PC-9 (cell line): ENCODE measurements at regions of chr1 and their contacts with region 1.

Region 1: DNA sequence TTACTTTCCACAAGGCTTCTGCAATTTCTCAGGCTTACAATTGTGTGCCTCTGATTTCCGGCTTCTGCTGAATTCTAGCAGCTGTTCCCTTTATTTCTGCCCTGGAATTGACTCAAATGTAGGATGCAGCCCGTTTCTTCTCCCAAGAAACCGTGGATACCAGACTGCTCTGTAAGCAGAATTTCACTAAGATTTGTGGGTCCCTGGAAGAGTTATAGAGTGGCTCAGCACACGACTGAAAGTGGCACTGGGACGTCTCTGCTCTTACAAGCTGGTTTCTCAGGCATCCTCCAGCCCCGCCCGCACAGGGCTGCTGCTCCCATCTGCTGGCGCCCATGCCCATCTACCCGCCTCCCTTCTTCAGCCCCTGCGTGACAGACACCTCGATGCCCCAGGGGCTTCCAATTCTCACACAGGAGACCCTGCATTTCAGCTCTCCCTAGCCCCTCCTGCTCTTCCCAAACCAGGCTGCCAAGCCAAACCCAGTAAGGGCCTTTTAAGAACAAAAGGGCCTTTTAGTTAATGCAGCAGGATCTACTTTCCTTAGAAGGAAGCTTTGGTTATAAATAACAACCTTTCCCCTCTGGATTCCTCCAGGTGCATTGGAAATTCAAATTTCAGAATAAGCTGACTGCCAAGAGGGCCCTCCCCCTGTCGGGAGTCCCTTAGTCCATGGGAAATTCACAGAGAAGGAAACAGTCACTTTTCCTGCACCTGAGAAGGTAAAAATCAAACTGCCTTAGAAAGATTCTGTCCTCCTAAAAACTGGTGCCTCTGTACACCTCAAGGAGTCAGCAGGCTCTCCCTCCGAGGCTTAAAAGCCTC is 45.4 kb upstream of the TENT5B start:
- DNase-seq: no peak
- H3K4me3 ChIP-seq: no peak overlapping the region
- H3K27ac ChIP-seq: no peak overlapping the region
- H3K4me1 ChIP-seq: no peaks in the 10 kb centered on the region
- H3K27me3 ChIP-seq: no peaks in the 10 kb centered on the region
- CTCF ChIP-seq: no peak

Region 2: DNA sequence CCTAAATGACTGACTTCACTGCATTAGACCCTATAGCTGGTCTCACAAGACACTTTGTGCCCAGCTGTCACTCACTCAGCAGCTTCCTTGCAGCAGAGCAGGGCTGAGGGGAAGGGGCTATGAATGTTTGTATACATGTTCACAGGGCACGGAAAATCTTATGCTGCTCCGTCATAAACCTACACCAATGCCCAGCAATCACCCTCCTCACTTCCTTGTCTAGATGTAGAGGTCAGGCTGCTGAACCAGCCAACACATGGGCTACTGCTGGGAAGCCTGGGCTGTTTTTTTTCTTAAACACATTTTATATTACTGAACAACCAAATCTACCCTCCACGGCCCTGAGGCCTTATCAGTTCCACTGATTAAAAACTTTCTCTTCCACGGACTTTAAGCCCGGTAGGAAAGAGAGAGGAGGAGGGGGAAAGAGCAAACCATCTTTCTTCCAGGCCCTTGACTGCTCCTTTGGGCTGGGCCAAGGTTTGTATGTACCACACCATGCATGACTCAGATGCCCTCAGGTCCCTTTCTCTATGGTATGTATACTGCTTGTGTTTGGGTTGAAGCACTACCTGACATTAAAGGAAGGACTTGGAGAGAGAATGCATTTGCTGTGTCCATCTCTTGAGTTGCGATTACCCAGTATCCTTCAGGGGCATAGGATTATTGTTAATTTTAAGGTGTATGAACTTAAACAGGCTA is 1225.5 kb before region 1 on chr1:
- CTCF ChIA-PET with region 1: no interaction called
- POLR2A ChIA-PET with region 1: no interaction called
- intact Hi-C with region 1: no loop called
- DNase-seq: no peak
- H3K4me3 ChIP-seq: no peak overlapping the region
- H3K27ac ChIP-seq: no peak overlapping the region
- H3K4me1 ChIP-seq: no peaks in the 10 kb centered on the region
- H3K27me3 ChIP-seq: no peaks in the 10 kb centered on the region
- CTCF ChIP-seq: no peak

Region 3: DNA sequence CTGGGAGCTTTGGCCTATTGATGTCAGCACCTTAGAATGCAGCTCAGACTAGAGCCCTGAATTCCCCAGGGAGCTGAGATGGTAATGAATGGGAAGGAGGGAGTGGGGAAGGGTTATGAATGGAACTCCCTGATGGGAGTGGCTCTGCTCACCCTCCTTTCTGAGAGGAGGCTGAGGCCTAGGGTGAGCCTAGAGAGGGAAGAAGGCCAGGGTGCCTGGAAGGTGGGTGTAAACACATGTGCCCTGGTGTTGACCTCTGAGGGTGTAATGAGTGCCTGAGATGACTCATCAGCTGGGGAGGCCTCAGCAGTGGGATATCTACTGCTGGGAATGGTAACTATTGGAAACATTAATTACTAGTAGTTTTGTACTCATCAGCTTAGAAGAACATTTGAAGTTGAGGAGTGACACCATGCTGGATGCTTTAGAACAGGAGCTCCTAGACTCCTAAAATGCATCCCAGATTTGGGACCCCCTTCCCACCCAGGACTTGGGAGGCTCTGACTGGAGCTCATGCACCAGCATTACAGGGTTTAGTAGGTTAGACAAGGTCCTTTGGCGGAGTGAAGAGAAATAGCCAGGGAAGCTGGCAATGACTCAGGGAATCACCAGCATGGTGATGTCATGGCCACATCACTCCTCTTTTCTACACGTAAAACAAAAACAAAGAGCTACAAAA is 286.2 kb before region 1 on chr1:
- CTCF ChIA-PET with region 1: interaction called, 17 read pairs
- POLR2A ChIA-PET with region 1: no interaction called
- intact Hi-C with region 1: no loop called
- DNase-seq: peak; percentile 89 to 90
- H3K4me3 ChIP-seq: no peak overlapping the region
- H3K27ac ChIP-seq: peak overlapping the region; percentile 79
- H3K4me1 ChIP-seq: peaks cover 41% of the 10 kb centered on the region
- H3K27me3 ChIP-seq: no peaks in the 10 kb centered on the region
- CTCF ChIP-seq: no peak

Region 4: GRCh38 chr1:27071049-27071416 is 13.0 kb after region 1 on chr1:
- CTCF ChIA-PET with region 1: interaction called, 23 read pairs
- POLR2A ChIA-PET with region 1: no interaction called
- intact Hi-C with region 1: no loop called
- DNase-seq: no peak
- H3K4me3 ChIP-seq: no peak overlapping the region
- H3K27ac ChIP-seq: no peak overlapping the region
- H3K4me1 ChIP-seq: no peaks in the 10 kb centered on the region
- H3K27me3 ChIP-seq: no peaks in the 10 kb centered on the region
- CTCF ChIP-seq: no peak

Region 5: DNA sequence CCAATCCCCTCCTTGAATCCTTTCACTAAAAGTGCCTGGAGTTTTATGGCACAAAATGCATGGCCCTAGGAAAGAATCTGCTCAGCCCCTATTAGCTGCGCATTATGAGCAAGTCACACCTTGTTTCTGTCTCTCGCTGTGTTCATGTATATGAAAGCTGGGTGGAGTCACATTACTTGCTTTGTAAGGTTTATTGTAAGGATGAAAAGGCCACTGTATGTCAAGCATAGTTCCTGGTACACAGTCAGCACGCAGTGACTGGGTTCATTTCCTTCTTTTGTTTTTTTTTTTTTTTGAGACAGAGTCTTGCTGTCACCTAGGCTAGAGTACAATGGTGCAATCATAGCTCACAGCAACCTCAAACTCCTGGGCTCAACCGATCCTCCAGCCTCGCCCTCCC is 103.6 kb after region 1 on chr1:
- CTCF ChIA-PET with region 1: no interaction called
- POLR2A ChIA-PET with region 1: interaction called, 13 read pairs
- intact Hi-C with region 1: no loop called
- DNase-seq: peak; percentile 40 to 92
- H3K4me3 ChIP-seq: no peak overlapping the region
- H3K27ac ChIP-seq: peak overlapping the region; percentile 80
- H3K4me1 ChIP-seq: peaks cover 20% of the 10 kb centered on the region
- H3K27me3 ChIP-seq: no peaks in the 10 kb centered on the region
- CTCF ChIP-seq: no peak

Region 6: GRCh38 chr1:27203946-27204345 is 145.9 kb after region 1 on chr1:
- CTCF ChIA-PET with region 1: interaction called, 10 read pairs
- POLR2A ChIA-PET with region 1: no interaction called
- intact Hi-C with region 1: no loop called
- DNase-seq: no peak
- H3K4me3 ChIP-seq: no peak overlapping the region
- H3K27ac ChIP-seq: no peak overlapping the region
- H3K4me1 ChIP-seq: no peaks in the 10 kb centered on the region
- H3K27me3 ChIP-seq: no peaks in the 10 kb centered on the region
- CTCF ChIP-seq: no peak